Activated CD8-positive, alpha-beta T cell treated with anti-CD3 and anti-CD28 coated beads, Interleukin-2, amount 10 ng/mL, durations not matched to agents 7 days and 5 days (primary cell): ENCODE measurements at regions of chr2 and their contacts with region 1.

Region 1: GRCh38 chr2:219206442-219207253 is at the start of gene ZFAND2B:
- DNase-seq: peak; percentile 95
- ATAC-seq: peak; percentile 98
- H3K4me3 Mint-ChIP-seq: peak within 1 kb of the TSS; percentile 86
- H3K27ac Mint-ChIP-seq: peak within 1 kb of the TSS; percentile 96
- H3K4me1 Mint-ChIP-seq: peaks cover 57% of the 10 kb centered on the region
- H3K27me3 Mint-ChIP-seq: no peaks in the 10 kb centered on the region
- total RNA-seq, gene ZFAND2B: 57.0 to 59.5 TPM

Region 2: GRCh38 chr2:219160186-219161017 is 46.2 kb before region 1 on chr2 and contains the start of gene NHEJ1:
- CTCF ChIA-PET with region 1: interaction called, 41 read pairs
- POLR2A ChIA-PET with region 1: interaction called, 5 read pairs
- DNase-seq: peak; percentile 94
- ATAC-seq: peak; percentile 89
- H3K4me3 Mint-ChIP-seq: peak within 1 kb of the TSS; percentile 88
- H3K27ac Mint-ChIP-seq: peak within 1 kb of the TSS; percentile 95
- H3K4me1 Mint-ChIP-seq: peaks cover 20% of the 10 kb centered on the region
- H3K27me3 Mint-ChIP-seq: no peaks in the 10 kb centered on the region
- total RNA-seq, gene NHEJ1: 19.1 to 23.1 TPM

Region 3: GRCh38 chr2:219177552-219178376 is 28.9 kb before region 1 on chr2 and contains the start of gene RETREG2:
- CTCF ChIA-PET with region 1: interaction called, 17 read pairs
- POLR2A ChIA-PET with region 1: interaction called, 49 read pairs
- DNase-seq: peak; percentile 82
- ATAC-seq: peak; percentile 55
- H3K4me3 Mint-ChIP-seq: peak within 1 kb of the TSS; percentile 92
- H3K27ac Mint-ChIP-seq: peak within 1 kb of the TSS; percentile 95
- H3K4me1 Mint-ChIP-seq: peaks cover 61% of the 10 kb centered on the region
- H3K27me3 Mint-ChIP-seq: no peaks in the 10 kb centered on the region
- total RNA-seq, gene RETREG2: 104 to 111 TPM

Region 4: GRCh38 chr2:219229305-219230058 is 22.8 kb after region 1 on chr2 and contains the starts of genes ANKZF1 and ATG9A:
- CTCF ChIA-PET with region 1: no interaction called
- POLR2A ChIA-PET with region 1: interaction called, 11 read pairs
- DNase-seq: peak; percentile 100
- ATAC-seq: peak; percentile 98
- H3K4me3 Mint-ChIP-seq: peak within 1 kb of the TSS; percentile 100
- H3K27ac Mint-ChIP-seq: peak within 1 kb of the TSS; percentile 100
- H3K4me1 Mint-ChIP-seq: peaks cover 61% of the 10 kb centered on the region
- H3K27me3 Mint-ChIP-seq: no peaks in the 10 kb centered on the region
- total RNA-seq, gene ANKZF1: 106 to 114 TPM
- total RNA-seq, gene ATG9A: 51.7 to 53.8 TPM

Region 5: DNA sequence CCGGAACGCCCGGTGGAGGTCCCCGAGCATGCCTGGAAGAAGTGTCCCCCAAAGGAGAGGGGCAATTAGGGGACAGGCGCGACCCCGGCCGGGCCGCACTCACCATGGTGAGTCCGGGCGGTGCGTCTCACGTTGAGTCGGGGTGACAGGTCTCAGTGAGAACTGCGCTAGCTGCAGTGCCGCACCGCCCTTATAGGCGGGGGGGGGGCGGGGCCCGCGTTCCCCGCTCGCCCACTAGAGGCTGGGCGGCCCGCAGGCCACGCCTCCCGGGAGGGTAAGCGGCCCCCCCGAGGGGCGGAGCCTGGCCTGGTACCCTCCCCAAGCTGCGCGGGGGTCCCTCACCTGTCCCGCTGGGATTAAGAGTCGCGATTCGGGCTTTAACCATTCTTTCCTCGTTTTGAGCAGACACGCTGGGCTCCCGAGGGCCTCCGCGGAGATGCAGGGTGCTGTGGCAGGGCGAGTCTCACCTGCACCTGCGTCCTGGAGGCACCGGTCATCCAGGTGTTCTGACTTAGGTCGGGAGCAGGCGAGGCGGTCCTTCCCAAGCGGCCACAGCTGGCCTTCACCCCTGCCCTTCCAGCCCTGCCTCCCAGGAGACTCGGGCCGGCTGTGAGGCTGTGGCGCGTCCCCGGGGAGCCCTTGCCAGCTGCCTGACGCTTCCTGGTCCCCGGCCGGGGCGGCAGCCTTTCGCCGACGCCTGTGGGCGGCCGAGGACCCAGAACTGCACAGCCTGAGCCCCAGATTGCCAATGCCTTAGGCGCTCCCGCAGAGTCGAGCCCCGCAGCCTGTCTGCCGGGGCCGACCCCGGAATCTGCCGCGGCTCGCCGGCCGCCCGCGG is 47.3 kb after region 1 on chr2 and contains the start of gene TUBA4A:
- CTCF ChIA-PET with region 1: interaction called, 4 read pairs
- POLR2A ChIA-PET with region 1: interaction called, 11 read pairs
- DNase-seq: peak; percentile 91
- ATAC-seq: peak; percentile 80
- H3K4me3 Mint-ChIP-seq: peak within 1 kb of the TSS; percentile 99
- H3K27ac Mint-ChIP-seq: peak within 1 kb of the TSS; percentile 100
- H3K4me1 Mint-ChIP-seq: peaks cover 44% of the 10 kb centered on the region
- H3K27me3 Mint-ChIP-seq: no peaks in the 10 kb centered on the region
- total RNA-seq, gene TUBA4A: 286 to 292 TPM

Region 6: DNA sequence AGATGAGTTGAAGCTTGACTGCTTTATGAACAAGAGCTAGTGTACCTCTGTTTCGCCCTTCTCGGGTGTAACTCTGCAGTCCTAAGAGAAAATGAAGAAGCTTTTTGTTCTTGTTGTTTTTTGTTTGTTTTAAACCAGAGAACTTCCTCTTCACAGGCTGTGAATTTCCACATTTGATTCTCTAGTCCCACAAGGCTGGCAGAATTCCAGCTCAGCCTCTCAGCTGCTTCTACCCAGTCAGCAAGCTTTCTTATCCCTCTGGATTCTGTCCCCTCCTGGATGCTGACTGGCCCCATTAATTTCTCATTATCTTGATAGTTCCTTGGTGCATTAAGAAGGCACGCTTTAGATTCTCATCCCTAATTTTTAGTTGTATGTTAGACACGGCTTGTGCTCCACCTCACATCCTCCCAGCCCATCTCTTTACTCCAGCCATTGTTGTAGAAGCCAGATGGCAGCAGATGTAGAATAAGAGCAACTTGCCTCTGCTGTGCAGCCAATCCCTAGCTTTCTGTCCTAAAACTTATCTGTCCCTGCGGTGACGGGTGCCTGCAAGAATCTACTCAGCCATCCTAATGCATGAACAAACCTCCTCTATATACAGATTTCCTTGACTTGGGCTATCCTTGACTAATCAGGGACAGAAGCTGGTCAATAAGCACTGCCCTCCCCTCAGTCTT is 138.2 kb after region 1 on chr2:
- CTCF ChIA-PET with region 1: no interaction called
- POLR2A ChIA-PET with region 1: no interaction called
- DNase-seq: no peak
- ATAC-seq: no peak
- H3K4me3 Mint-ChIP-seq: no peak overlapping the region
- H3K27ac Mint-ChIP-seq: no peak overlapping the region
- H3K4me1 Mint-ChIP-seq: no peaks in the 10 kb centered on the region
- H3K27me3 Mint-ChIP-seq: peaks cover 11% of the 10 kb centered on the region